GM13976 (cell line): ENCODE measurements at regions of chr3 and their contacts with region 1.

Region 1: GRCh38 chr3:195914648-195915473 is 6.5 kb upstream of the TNK2 start:
- DNase-seq: peak; percentile 94
- CTCF ChIP-seq: peak; percentile 86

Region 2: GRCh38 chr3:195863121-195864006 is 51.5 kb before region 1 on chr3:
- in situ Hi-C with region 1: loop called (anchors 5 kb)
- DNase-seq: peak; percentile 89
- CTCF ChIP-seq: peak; percentile 93

Region 3: DNA sequence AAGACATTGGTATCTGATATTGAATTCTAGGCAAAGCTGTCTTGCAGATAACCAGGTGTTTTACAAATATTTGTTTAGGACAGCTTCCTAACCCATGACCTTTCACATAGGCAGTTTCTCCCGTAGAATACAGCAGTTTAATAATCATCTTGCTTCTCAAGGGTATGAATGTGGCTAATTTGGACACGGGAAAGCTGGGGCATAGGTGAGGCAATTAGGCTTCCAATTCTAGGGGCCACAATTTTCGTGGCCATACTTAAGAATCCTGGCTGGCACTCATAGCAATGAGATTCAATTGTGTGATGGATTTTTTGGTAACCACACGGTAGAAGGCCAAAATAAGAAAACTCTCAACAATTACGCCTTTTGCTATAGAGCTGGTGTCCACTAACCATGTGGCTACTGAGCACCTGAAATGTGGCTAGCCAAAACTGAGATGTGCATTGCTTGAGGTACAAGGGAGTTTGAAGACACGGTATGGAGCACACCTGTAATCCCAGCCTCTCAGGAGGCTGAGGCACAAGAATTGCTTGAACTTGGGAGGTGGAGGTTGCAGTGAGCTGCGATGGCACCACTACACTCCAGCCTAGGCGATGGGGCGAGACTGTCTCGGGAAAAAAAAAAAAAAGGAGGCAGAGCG is 132.7 kb after region 1 on chr3:
- in situ Hi-C with region 1: no loop called
- DNase-seq: no peak
- CTCF ChIP-seq: no peak